B cell (primary cell): ENCODE measurements at regions of chr7 and their contacts with region 1.

Region 1: DNA sequence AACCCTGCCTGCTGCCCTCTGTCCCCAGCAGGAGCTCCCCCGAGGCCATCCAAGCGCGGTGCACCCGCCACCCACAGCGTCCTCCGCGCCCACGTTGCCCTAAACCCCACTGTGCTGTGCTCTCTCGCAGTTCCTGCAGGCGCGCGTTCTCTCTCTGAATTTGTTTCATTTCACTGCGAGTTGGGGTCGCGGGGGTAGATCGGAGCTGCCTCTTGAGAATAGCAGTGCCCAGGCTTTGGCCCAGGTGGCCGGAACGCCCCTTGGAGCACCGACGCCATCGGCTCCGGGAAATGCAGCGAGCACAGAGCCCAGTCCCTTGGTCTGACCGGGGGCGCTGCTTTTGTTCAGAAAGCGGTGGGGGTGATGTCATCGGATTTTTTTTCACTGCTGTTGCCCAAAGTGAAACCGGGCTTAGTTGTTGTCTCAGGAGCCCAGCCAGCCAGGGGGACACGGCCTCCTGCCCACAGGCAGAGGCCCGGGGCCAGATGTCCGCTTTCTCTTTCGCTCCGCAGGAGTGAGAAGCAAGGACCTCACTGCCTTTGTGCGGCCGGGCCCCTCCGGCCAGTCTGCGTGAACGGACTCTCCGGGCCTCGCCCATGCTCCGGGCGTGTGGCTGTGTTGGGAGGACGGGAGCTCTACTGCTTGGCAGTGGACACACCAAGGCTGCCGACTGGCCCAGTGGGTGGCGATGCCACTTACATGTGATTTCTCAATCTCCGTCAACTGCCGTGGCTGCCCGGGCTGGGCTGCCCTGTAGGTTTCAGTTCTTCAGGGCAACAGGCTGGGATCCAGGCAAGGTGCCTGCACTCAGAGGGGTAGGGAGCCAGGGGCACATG is 43.1 kb downstream of the FOXK1 start:
- DNase-seq: peak; percentile 74
- ATAC-seq: peak; percentile 78
- H3K4me3 ChIP-seq: peak overlapping the region; percentile 32 to 84 (median 63)
- H3K4me3 Mint-ChIP-seq: peak overlapping the region; percentile 95
- H3K27ac ChIP-seq: peak overlapping the region; percentile 80 to 89
- H3K27ac Mint-ChIP-seq: peak overlapping the region; percentile 92
- H3K4me1 ChIP-seq: peaks cover 13 to 28% of the 10 kb centered on the region in 2 donors
- H3K4me1 Mint-ChIP-seq: peaks cover 45% of the 10 kb centered on the region
- H3K27me3 ChIP-seq: no peaks in the 10 kb centered on the region
- H3K27me3 Mint-ChIP-seq: no peaks in the 10 kb centered on the region
- CTCF ChIP-seq: no peak

Region 2: DNA sequence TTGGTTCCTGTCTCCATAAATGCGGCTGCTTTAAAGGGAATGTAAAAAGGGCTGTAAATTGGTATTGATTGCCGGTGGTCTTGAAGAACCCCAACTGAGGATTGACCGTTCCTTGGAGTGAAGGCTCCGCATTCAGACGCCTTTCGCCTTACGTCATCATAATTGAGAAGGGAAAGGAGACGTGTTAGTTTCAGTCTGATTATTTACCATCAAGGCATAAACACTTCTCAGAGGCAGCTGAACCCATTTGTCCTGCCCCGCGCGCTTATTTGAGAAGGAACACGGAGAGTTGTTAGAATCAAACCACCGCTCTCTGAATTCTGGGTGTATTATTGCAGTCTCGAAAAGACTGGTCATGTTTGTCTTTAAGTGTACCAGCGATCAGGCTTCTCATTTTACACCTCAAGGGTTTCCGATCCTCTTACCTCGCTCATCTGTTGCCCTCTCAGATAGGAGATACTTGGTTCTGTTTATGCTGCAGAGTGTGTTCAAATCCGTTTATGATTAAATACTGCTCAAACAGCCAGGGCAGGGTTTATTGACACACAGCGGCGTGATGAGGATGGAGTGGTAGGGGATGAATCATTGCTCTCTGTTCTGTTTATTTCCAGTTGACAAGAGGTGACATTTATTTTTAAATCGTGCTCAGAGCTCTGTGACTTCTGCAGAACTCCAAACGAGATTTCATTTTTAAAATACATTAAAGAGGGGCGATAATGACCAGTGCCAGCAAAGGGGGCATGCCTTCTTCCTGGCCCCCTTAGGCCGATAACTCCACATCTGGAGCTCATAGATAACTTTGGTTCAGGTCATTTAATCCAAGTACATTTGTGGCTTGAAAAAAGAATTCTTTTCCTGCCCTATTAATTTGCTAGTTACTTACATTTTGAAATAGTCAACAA is 12.7 kb before region 1 on chr7:
- CTCF ChIA-PET with region 1: interaction called, 7 read pairs
- POLR2A ChIA-PET with region 1: interaction called, 3 read pairs
- intact Hi-C with region 1: loop called (anchors 1 kb)
- DNase-seq: peak; percentile 25
- ATAC-seq: peak; percentile 73
- H3K4me3 ChIP-seq: peak overlapping the region in 2 of 5 experiments; percentile 0 to 38
- H3K4me3 Mint-ChIP-seq: peak overlapping the region; percentile 82
- H3K27ac ChIP-seq: peak overlapping the region; percentile 5 to 10
- H3K27ac Mint-ChIP-seq: peak overlapping the region; percentile 83
- H3K4me1 ChIP-seq: peaks cover 4 to 25% of the 10 kb centered on the region in 2 donors
- H3K4me1 Mint-ChIP-seq: peaks cover 55% of the 10 kb centered on the region
- H3K27me3 ChIP-seq: no peaks in the 10 kb centered on the region
- H3K27me3 Mint-ChIP-seq: no peaks in the 10 kb centered on the region
- CTCF ChIP-seq: no peak

Region 3: GRCh38 chr7:4744391-4745264 is 19.4 kb after region 1 on chr7:
- CTCF ChIA-PET with region 1: interaction called, 7 read pairs
- POLR2A ChIA-PET with region 1: no interaction called
- intact Hi-C with region 1: loop called (anchors 1 kb)
- DNase-seq: peak; percentile 69
- ATAC-seq: peak; percentile 84
- H3K4me3 ChIP-seq: peak overlapping the region in 4 of 5 experiments; percentile 36 to 61 (median 52)
- H3K4me3 Mint-ChIP-seq: peak overlapping the region; percentile 82
- H3K27ac ChIP-seq: peak overlapping the region; percentile 70 to 78
- H3K27ac Mint-ChIP-seq: peak overlapping the region; percentile 95
- H3K4me1 ChIP-seq: peaks cover 21 to 45% of the 10 kb centered on the region in 2 donors
- H3K4me1 Mint-ChIP-seq: peaks cover 49% of the 10 kb centered on the region
- H3K27me3 ChIP-seq: no peaks in the 10 kb centered on the region
- H3K27me3 Mint-ChIP-seq: no peaks in the 10 kb centered on the region
- CTCF ChIP-seq: no peak

Region 4: DNA sequence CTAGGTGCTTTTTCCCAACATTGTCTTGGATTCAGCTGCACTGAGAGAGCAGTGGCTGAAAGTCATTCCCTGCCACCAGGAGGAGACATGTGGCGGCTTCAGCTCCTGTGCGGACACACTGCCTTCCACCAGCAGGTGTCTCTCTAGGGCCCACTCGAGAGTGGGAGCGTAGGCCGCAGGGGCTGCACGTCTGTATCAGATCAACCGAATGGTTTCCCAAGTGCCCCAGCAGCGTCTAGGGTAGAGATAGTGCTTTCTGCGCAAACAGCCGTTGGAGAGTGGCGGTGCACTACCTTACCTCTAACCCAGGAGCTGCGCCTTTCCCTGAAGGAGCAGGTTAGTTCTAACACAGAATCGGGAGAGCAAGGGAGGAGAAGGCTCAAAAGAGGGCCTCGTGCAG is 104.9 kb after region 1 on chr7:
- CTCF ChIA-PET with region 1: no interaction called
- POLR2A ChIA-PET with region 1: no interaction called
- intact Hi-C with region 1: no loop called
- DNase-seq: peak; percentile 63
- ATAC-seq: peak; percentile 72
- H3K4me3 ChIP-seq: no peak overlapping the region
- H3K4me3 Mint-ChIP-seq: no peak overlapping the region
- H3K27ac ChIP-seq: no peak overlapping the region
- H3K27ac Mint-ChIP-seq: no peak overlapping the region
- H3K4me1 ChIP-seq: no peaks in the 10 kb centered on the region
- H3K4me1 Mint-ChIP-seq: no peaks in the 10 kb centered on the region
- H3K27me3 ChIP-seq: no peaks in the 10 kb centered on the region
- H3K27me3 Mint-ChIP-seq: no peaks in the 10 kb centered on the region
- CTCF ChIP-seq: peak; percentile 64